ENCODE measurements at regions of chr9 and their contacts with region 1.

Region 1: DNA sequence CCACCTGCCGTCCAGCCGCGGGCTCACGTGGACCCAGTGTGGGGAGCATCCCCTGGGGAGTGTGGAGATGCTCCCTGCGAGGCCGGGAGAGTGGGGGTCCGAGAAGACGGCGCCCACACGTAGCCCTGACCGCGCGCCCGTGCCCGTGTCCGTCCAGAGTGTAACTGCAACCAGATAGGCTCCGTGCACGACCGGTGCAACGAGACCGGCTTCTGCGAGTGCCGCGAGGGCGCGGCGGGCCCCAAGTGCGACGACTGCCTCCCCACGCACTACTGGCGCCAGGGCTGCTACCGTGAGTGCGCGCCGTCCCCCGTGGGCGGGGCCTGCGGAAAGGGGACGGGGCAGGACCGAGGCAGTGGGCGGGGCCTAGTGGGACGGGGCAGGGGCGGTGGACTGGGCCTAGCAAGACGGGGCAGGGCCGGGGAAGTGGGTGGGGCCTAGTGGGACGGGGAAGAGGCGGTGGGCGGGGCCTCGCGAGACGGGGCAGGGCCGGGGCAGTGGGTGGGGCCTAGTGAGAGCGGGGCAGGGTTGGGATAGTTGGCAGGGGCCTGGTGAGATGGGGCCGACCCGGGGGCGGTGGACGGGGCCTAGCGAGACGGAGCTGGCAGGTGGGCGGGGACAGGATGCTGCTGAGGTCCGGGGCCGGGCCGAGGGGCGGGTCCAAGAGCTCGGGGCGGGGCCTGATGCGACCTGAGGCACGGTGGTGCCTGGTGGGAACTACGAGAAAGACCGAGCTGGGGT is 79.1 kb downstream of the NTNG2 start:
- DNase-seq: peak; percentile 85 to 88
- ATAC-seq: peak; percentile 75 to 84
- H3K4me3 ChIP-seq: peak overlapping the region; percentile 53 to 70 (median 56)
- H3K27ac ChIP-seq: no peak overlapping the region
- H3K4me1 ChIP-seq: peaks cover 0 to 10% of the 10 kb centered on the region in 2 donors
- H3K27me3 ChIP-seq: peaks cover 28 to 30% (median 28%) of the 10 kb centered on the region in 3 donors
- CTCF ChIP-seq: no peak
- POLR2A ChIP-seq: no peak

Region 2: GRCh38 chr9:131590908-131591844 is 649.7 kb before region 1 on chr9:
- in situ Hi-C with region 1: no loop called
- intact Hi-C with region 1: loop called (anchors 10 kb)
- DNase-seq: peak; percentile 55 to 83
- ATAC-seq: peak; percentile 70 to 77
- H3K4me3 ChIP-seq: no peak overlapping the region
- H3K27ac ChIP-seq: peak overlapping the region; percentile 18 to 73 (median 62)
- H3K4me1 ChIP-seq: peaks cover 0 to 8% of the 10 kb centered on the region in 2 donors
- H3K27me3 ChIP-seq: no peaks in the 10 kb centered on the region
- CTCF ChIP-seq: peak; percentile 94 to 98 (median 96)
- POLR2A ChIP-seq: no peak

Region 3: GRCh38 chr9:131762356-131762932 is 478.5 kb before region 1 on chr9:
- in situ Hi-C with region 1: no loop called
- intact Hi-C with region 1: loop called (anchors 1 kb)
- DNase-seq: peak; percentile 21 to 47
- ATAC-seq: peak; percentile 68 to 81
- H3K4me3 ChIP-seq: peak overlapping the region in 1 of 4 donors; percentile 22
- H3K27ac ChIP-seq: no peak overlapping the region
- H3K4me1 ChIP-seq: no peaks in the 10 kb centered on the region
- H3K27me3 ChIP-seq: peaks cover 0 to 3% (median 0%) of the 10 kb centered on the region in 3 donors
- CTCF ChIP-seq: peak; percentile 92 to 98 (median 96)
- POLR2A ChIP-seq: no peak

Region 4: GRCh38 chr9:132079391-132080091 is 161.4 kb before region 1 on chr9 and contains the start of gene MED27:
- in situ Hi-C with region 1: no loop called
- intact Hi-C with region 1: loop called (anchors 2 kb)
- DNase-seq: peak; percentile 84 to 86
- ATAC-seq: peak; percentile 96 to 97
- H3K4me3 ChIP-seq: peak within 1 kb of the TSS; percentile 63 to 99 (median 94)
- H3K27ac ChIP-seq: peak within 1 kb of the TSS; percentile 71 to 87 (median 86)
- H3K4me1 ChIP-seq: peaks cover 30 to 40% of the 10 kb centered on the region in 2 donors
- H3K27me3 ChIP-seq: no peaks in the 10 kb centered on the region
- CTCF ChIP-seq: no peak
- POLR2A ChIP-seq: peak; percentile 34 to 59
- total RNA-seq, gene MED27: 11.6 to 20.3 (median 13.9) TPM

Region 5: DNA sequence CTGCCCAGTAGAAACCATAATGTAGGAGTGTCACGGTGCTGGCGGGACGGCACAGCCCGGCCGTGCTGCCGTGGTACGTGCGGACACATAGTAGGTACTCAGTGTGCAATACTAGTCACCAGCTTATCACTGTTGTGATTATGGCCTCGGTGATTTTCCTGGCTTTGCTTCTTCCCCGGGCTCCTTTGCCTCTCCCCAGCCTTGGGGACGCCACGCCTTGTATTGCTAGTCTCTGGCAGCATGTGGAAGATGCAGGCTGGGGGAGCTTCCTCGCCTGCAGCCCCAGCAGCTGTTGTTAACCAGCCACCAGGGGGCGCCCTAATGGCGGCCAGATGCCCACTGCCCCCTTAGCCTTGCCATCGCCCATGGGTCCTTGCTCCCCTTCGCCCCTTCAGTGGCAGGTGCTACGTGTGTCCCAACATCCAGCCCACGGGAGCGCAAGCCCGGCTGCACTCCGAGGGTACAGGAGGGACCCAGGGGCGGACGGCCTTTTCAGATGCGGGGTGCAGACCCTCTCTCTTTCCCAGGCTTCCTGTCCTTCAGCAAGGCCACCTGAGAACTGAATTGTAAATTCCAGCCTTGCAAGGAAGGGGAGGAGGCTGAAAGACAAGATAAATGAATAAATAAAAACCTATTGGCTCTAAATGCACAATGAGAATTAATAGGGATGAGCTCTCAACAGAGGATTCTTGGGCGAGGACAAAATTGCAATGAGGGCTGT is 71.1 kb before region 1 on chr9:
- in situ Hi-C with region 1: loop called in 1 of 4 experiments (anchors 10 kb)
- intact Hi-C with region 1: loop called (anchors 1 kb)
- DNase-seq: no peak
- ATAC-seq: peak in 1 of 2 donors; percentile 70
- H3K4me3 ChIP-seq: no peak overlapping the region
- H3K27ac ChIP-seq: no peak overlapping the region
- H3K4me1 ChIP-seq: peaks cover 6 to 7% of the 10 kb centered on the region in 2 donors
- H3K27me3 ChIP-seq: peaks cover 37 to 40% (median 39%) of the 10 kb centered on the region in 3 donors
- CTCF ChIP-seq: peak; percentile 56 to 92 (median 85)
- POLR2A ChIP-seq: no peak

Region 6: DNA sequence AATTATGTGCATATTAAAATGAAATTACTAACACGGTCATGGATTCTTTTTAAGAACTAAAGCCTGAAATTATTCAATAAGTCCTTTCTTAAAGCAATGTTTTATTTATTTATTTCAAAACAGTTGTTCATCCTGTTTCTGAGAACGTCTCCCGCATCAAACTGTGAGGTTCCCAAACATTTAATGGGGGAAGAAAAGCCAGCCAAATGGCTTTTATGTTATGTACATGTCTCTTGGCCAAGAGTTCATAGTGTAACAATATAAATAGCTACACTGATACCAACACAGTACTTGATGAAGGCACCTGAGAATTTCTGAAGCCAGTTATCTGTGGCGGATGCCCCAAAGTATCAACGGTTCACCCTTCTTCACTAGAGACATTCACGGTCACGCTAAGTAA is 150.0 kb after region 1 on chr9:
- in situ Hi-C with region 1: no loop called
- intact Hi-C with region 1: no loop called
- DNase-seq: no peak
- ATAC-seq: no peak
- H3K4me3 ChIP-seq: no peak overlapping the region
- H3K27ac ChIP-seq: no peak overlapping the region
- H3K4me1 ChIP-seq: no peaks in the 10 kb centered on the region
- H3K27me3 ChIP-seq: no peaks in the 10 kb centered on the region
- CTCF ChIP-seq: no peak
- POLR2A ChIP-seq: no peak

Region 7: DNA sequence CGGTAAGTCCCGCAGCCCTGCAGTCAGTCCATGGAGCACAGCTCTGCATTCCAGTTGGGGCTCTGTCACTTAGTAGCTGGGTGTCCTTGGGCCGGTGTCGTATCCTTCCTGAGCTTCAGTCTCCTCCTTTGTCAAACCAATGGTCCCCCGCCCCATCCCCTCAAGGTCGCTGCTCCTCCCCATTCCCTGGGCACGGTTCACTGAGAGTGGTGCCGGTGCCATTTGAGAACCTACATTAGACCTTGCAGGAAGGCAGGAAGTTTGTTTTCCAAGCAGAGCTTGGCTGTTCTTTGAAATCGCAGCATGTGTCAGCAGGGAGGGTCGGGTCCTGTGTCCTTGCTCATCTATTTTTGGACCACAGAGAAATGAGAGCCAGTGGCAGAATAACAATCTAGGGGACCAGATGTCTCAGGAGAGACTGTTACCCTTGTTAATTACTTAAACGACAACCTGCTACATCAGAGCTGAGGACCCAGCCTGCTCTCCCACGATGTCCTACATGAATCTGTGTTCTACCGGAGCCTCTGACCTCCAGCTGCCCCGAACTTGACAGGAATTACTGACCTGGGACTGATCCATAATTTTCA is 319.8 kb after region 1 on chr9:
- in situ Hi-C with region 1: no loop called
- intact Hi-C with region 1: loop called (anchors 10 kb)
- DNase-seq: no peak
- ATAC-seq: no peak
- H3K4me3 ChIP-seq: peak overlapping the region in 1 of 4 donors; percentile 9
- H3K27ac ChIP-seq: no peak overlapping the region
- H3K4me1 ChIP-seq: peaks cover 4 to 13% of the 10 kb centered on the region in 2 donors
- H3K27me3 ChIP-seq: peaks cover 12 to 42% (median 19%) of the 10 kb centered on the region in 3 donors
- CTCF ChIP-seq: no peak
- POLR2A ChIP-seq: no peak

Measured in gastrocnemius medialis (tissue), 4 donors.